ENCODE measurements at regions of chr4 and their contacts with region 1.

Region 1: DNA sequence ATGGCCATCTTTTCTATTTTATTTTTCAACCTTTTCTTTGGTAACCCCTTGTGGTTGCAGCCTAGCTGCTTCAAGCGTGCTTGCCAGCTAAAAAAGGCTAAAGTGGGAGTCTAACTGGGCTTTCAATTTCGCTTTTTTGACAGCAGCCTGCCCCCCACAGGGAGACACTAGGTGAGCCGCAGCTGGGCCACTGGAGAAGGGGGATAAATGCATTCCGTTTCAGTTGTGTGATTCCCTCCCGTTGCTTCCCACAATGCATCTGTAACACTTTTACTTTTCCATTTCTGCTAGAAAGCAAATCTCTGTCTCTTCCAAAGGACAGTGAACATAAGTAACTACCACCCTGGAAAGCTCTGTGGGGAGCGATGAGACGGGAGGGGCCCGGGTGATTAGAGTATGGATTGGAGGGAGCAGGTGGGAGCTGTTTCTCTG is 86.3 kb upstream of the RAPGEF2 start:
- DNase-seq: peak; percentile 56
- ATAC-seq: peak; percentile 74
- H3K4me3 ChIP-seq: no peak overlapping the region
- H3K27ac ChIP-seq: no peak overlapping the region
- H3K4me1 ChIP-seq: peaks cover 24% of the 10 kb centered on the region
- H3K27me3 ChIP-seq: no peaks in the 10 kb centered on the region
- CTCF ChIP-seq: peak; percentile 46 to 59 (median 49); a peak in 5 of 6 replicates
- EP300 ChIP-seq: 0 out of 4 replicates have a peak, but pooled peaks of 1 of the 2 experiments have one; percentile 19
- POLR2A ChIP-seq: no peak
- RAD21 ChIP-seq: peak; percentile 35; the same call in 1 of the 2 replicates

Region 2: GRCh38 chr4:158856852-158857251 is 159.8 kb before region 1 on chr4:
- CTCF ChIA-PET with region 1: interaction called, 68 read pairs
- POLR2A ChIA-PET with region 1: no interaction called
- RAD21 ChIA-PET with region 1: interaction called, 80 read pairs
- SMC1A ChIA-PET with region 1: interaction called, 76 read pairs
- in situ Hi-C with region 1: no loop called
- intact Hi-C with region 1: loop called (anchors 1 kb)
- DNase-seq: no peak
- ATAC-seq: peak; percentile 78
- H3K4me3 ChIP-seq: no peak overlapping the region
- H3K27ac ChIP-seq: no peak overlapping the region
- H3K4me1 ChIP-seq: peaks cover 8% of the 10 kb centered on the region
- H3K27me3 ChIP-seq: no peaks in the 10 kb centered on the region
- CTCF ChIP-seq: peak; percentile 51 to 71 (median 52); a peak in 5 of 6 replicates
- EP300 ChIP-seq: no peak
- POLR2A ChIP-seq: no peak
- RAD21 ChIP-seq: peak; percentile 93

Region 3: GRCh38 chr4:158914218-158914617 is 102.4 kb before region 1 on chr4:
- CTCF ChIA-PET with region 1: no interaction called
- POLR2A ChIA-PET with region 1: no interaction called
- RAD21 ChIA-PET with region 1: interaction called, 3 read pairs
- SMC1A ChIA-PET with region 1: interaction called, 10 read pairs
- in situ Hi-C with region 1: no loop called
- intact Hi-C with region 1: no loop called
- DNase-seq: no peak
- ATAC-seq: no peak
- H3K4me3 ChIP-seq: no peak overlapping the region
- H3K27ac ChIP-seq: no peak overlapping the region
- H3K4me1 ChIP-seq: no peaks in the 10 kb centered on the region
- H3K27me3 ChIP-seq: no peaks in the 10 kb centered on the region
- CTCF ChIP-seq: no peak
- EP300 ChIP-seq: no peak
- POLR2A ChIP-seq: no peak
- RAD21 ChIP-seq: no peak

Region 4: GRCh38 chr4:159027535-159027934 is 10.9 kb after region 1 on chr4:
- CTCF ChIA-PET with region 1: interaction called, 7 read pairs
- POLR2A ChIA-PET with region 1: interaction called, 7 read pairs
- RAD21 ChIA-PET with region 1: interaction called, 12 read pairs
- SMC1A ChIA-PET with region 1: interaction called, 37 read pairs
- in situ Hi-C with region 1: no loop called
- intact Hi-C with region 1: no loop called
- DNase-seq: no peak
- ATAC-seq: peak; percentile 85
- H3K4me3 ChIP-seq: no peak overlapping the region
- H3K27ac ChIP-seq: no peak overlapping the region
- H3K4me1 ChIP-seq: peaks cover 7% of the 10 kb centered on the region; the same call in 1 of the 2 replicates
- H3K27me3 ChIP-seq: no peaks in the 10 kb centered on the region; a peak in 1 of 4 replicates
- CTCF ChIP-seq: no peak
- EP300 ChIP-seq: no peak
- POLR2A ChIP-seq: no peak
- RAD21 ChIP-seq: no peak

Region 5: DNA sequence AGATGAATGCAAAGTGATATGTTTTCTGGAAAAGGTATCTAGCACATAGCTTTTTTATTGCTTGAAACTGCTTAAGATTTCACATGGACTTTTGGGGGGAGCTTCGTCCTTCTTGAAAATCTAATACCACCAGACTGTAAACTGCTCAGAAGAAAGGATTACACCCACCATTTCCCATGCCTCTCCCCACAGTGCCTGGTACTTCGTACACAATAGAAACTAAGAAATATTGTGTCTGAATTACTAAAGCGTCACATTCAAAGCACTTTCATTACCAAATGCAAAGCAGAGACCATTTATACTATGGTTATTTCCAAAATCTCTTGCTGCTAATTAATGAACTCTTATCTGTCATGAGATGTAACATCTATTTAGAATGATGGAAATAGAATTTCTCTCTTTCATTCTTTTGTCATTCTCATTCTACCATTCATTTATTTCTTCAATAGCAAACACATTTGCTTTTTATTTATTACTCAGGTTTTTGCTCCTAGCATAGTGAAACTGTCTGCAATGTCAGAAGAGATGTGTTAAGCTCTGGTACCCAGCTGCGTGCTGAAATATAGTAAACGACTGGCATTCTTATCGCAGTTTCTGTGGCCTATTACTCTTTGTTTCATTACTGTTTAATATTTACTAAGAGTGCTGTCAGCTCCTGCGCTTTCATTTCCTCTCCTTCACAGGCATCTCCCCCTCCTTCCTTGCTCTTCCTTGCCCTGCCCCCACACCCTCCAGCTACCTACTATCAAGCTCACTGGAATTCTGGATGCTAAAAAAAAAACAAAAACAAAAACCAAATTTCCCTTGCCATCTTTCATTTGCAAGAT is 34.8 kb after region 1 on chr4:
- CTCF ChIA-PET with region 1: interaction called, 19 read pairs
- POLR2A ChIA-PET with region 1: interaction called, 5 read pairs
- RAD21 ChIA-PET with region 1: interaction called, 37 read pairs
- SMC1A ChIA-PET with region 1: interaction called, 19 read pairs
- in situ Hi-C with region 1: no loop called
- intact Hi-C with region 1: loop called (anchors 1 kb)
- DNase-seq: peak; percentile 84
- ATAC-seq: peak; percentile 92
- H3K4me3 ChIP-seq: peak overlapping the region; percentile 58; the same call in 1 of the 2 replicates
- H3K27ac ChIP-seq: peak overlapping the region; percentile 68
- H3K4me1 ChIP-seq: peaks cover 27% of the 10 kb centered on the region
- H3K27me3 ChIP-seq: no peaks in the 10 kb centered on the region
- CTCF ChIP-seq: no peak
- EP300 ChIP-seq: peak; percentile 70 to 75; a peak in 2 of 4 replicates
- POLR2A ChIP-seq: no peak
- RAD21 ChIP-seq: no peak

Region 6: DNA sequence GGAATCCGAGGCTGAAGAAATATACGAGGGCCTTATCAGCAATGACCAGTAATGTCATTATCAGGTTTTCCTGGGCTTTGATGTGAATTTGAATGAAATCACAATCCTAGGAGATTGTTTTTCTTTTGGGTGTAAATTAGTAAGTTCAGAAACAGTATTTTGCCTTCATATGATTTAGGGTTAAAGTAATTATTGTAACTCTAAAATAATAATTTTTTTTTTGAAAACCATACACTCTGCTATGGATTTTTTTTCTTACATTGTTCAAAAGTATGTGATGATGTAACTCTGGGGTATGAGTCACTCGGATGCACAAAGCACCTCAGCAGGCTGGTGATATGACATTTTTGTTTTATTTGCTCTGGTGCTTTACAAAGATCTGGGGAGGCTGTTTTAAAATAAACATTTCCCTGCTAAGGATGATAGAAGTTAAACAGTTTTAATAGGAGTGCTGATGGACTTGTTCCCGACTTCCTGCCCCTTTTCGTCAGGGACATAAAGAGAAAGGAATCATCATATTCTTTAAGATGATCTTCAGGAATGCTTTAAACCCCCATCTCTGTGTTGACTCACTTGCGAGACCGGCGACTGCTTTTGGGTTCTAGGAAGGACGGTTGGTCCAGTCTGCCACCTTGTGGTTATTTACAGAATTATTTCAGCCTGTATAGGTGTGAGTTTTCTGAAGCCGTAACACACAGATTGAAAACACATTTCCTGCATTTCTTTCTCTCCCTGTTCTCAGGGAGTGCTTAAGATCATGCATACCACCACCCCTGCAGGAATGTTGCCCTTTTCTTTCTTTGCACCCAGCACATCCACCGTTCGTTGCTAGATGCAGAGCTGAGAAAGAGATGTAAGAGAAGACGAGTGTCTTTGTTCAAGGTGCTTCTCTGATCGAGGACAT is 158.7 kb after region 1 on chr4:
- CTCF ChIA-PET with region 1: interaction called, 12 read pairs
- POLR2A ChIA-PET with region 1: no interaction called
- RAD21 ChIA-PET with region 1: interaction called, 15 read pairs
- SMC1A ChIA-PET with region 1: interaction called, 25 read pairs
- in situ Hi-C with region 1: no loop called
- intact Hi-C with region 1: loop called (anchors 2 kb)
- DNase-seq: peak; percentile 73
- ATAC-seq: peak; percentile 82
- H3K4me3 ChIP-seq: peak overlapping the region; percentile 60
- H3K27ac ChIP-seq: no peak overlapping the region; the same call in 1 of the 2 replicates
- H3K4me1 ChIP-seq: peaks cover 58% of the 10 kb centered on the region
- H3K27me3 ChIP-seq: no peaks in the 10 kb centered on the region
- CTCF ChIP-seq: peak; percentile 59 to 85 (median 75)
- EP300 ChIP-seq: no peak
- POLR2A ChIP-seq: no peak
- RAD21 ChIP-seq: peak; percentile 98

Measured in GM12878 (cell line).